AG04450 (cell line): ENCODE measurements at regions of chrX and their contacts with region 1.

Region 1: GRCh38 chrX:110156167-110156754 is 153.3 kb downstream of the TMEM164 start:
- DNase-seq: no peak
- H3K4me3 ChIP-seq: no peak overlapping the region
- H3K27ac ChIP-seq: no peak overlapping the region
- H3K27me3 ChIP-seq: no peaks in the 10 kb centered on the region
- CTCF ChIP-seq: peak; percentile 46

Region 2: GRCh38 chrX:110020536-110020935 is 135.7 kb before region 1 on chrX:
- CTCF ChIA-PET with region 1: interaction called, 12 read pairs
- POLR2A ChIA-PET with region 1: no interaction called
- DNase-seq: no peak
- H3K4me3 ChIP-seq: no peak overlapping the region
- H3K27ac ChIP-seq: no peak overlapping the region
- H3K27me3 ChIP-seq: no peaks in the 10 kb centered on the region
- CTCF ChIP-seq: no peak

Region 3: DNA sequence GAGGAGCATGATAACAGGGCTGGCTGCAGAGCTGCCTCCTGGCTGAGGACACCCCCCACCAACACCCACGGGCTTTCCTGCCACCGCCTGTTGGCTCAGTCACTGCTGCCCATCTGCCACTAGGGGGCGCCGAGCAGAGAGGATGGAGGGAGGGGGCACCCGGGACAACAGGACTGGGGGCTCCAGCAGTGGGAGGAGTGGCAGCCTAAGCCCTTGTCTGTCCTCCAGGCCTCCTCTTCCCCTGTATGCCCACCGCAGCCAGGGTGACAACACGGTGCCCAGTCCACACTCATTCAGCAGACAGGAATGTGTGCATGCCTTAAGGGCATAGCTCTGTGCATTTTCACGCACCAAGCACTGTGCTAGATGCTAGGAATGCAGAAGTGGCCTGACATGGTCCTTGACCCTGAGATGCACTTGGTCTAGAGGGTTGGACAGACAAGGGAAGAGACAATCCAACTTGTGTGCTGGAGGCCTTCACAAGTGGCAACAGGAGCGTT is 11.7 kb after region 1 on chrX:
- CTCF ChIA-PET with region 1: interaction called, 10 read pairs
- POLR2A ChIA-PET with region 1: no interaction called
- DNase-seq: no peak
- H3K4me3 ChIP-seq: no peak overlapping the region
- H3K27ac ChIP-seq: no peak overlapping the region
- H3K27me3 ChIP-seq: no peaks in the 10 kb centered on the region
- CTCF ChIP-seq: peak; percentile 50

Region 4: DNA sequence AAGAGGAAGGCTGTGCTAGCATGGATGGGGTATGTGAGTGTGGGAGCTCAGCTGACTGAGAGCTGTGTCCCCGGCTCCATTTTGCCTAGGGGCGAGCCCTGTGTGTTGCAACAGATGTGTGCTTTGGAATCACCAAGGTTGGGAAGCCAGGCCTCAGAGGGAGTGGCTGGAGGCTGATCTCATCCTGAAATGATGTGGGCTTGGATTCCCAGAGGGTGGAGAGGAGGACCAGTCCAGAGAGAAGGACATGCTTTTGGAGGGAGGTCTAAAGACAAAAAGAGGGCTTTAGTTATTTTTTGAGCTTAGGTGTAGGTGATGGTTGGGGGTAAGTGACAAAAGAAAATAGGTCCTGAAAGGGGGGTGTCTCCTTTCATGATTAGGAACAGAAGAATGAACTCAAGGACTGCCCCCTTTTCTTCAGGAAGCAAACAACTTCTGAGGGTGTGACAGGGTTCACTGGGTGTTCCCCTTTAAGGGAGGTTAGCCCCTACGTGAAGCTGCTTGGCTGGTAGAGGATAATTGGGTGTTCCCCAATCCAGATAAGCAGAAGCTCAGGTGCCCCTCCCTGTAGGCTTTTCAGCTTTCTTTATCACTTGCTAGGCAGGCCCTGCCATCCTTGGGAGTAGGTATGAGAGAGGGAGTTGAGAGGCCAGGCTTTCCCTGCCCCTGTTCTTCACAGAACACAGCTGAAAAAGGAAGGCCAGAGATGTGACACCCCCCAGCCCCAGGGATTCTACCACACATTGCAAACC is 246.4 kb after region 1 on chrX:
- CTCF ChIA-PET with region 1: interaction called, 464 read pairs
- POLR2A ChIA-PET with region 1: no interaction called
- DNase-seq: no peak
- H3K4me3 ChIP-seq: no peak overlapping the region
- H3K27ac ChIP-seq: peak overlapping the region; percentile 52
- H3K27me3 ChIP-seq: no peaks in the 10 kb centered on the region
- CTCF ChIP-seq: no peak

Region 5: GRCh38 chrX:110412971-110413721 is 256.9 kb after region 1 on chrX:
- CTCF ChIA-PET with region 1: interaction called, 464 read pairs
- POLR2A ChIA-PET with region 1: interaction called, 3 read pairs
- DNase-seq: no peak
- H3K4me3 ChIP-seq: no peak overlapping the region
- H3K27ac ChIP-seq: no peak overlapping the region
- H3K27me3 ChIP-seq: no peaks in the 10 kb centered on the region
- CTCF ChIP-seq: peak; percentile 80